Activated naive CD4-positive, alpha-beta T cell treated with anti-CD3 and anti-CD28 coated beads, Interleukin-2, amount 10 ng/mL, durations not matched to agents 7 days and 5 days (primary cell): ENCODE measurements at regions of chr9 and their contacts with region 1.

Region 1: GRCh38 chr9:35732122-35732799 is at the starts of genes CREB3 and TLN1:
- DNase-seq: peak; percentile 99
- H3K4me3 Mint-ChIP-seq: no peak within 1 kb of the TSS
- H3K27ac Mint-ChIP-seq: peak within 1 kb of the TSS; percentile 92
- H3K4me1 Mint-ChIP-seq: peaks cover 34% of the 10 kb centered on the region
- H3K27me3 Mint-ChIP-seq: no peaks in the 10 kb centered on the region

Region 2: DNA sequence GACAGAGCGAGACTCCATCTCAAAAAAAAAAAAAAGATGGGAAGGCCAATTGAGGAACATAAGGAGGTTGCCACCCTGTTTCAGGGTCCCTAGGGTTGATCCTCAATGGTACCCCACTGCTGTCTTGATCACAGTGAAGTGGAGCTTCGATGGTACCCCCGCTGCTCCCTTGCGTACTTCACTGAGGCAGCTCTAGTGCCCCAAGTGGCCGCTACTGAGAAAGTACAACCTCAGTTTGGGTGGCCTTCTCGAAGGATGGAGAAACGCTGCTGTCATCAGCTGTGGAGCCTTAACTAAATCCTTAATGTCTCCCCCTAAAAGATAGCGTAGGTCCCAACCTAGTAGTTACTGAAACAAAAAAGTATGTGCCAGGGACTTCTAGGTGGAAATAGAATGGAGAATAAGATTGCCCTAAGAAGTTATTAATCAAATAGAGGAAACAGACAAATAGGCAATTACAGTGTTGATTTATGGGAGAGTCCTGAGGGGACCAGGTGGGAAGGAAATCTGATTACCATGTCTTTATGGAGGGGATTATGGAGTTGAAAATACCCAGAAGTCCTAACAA is 120.9 kb before region 1 on chr9:
- CTCF ChIA-PET with region 1: interaction called, 15 read pairs
- DNase-seq: peak; percentile 70
- H3K4me3 Mint-ChIP-seq: no peak overlapping the region
- H3K27ac Mint-ChIP-seq: no peak overlapping the region
- H3K4me1 Mint-ChIP-seq: peaks cover 25% of the 10 kb centered on the region
- H3K27me3 Mint-ChIP-seq: peaks cover 27% of the 10 kb centered on the region

Region 3: DNA sequence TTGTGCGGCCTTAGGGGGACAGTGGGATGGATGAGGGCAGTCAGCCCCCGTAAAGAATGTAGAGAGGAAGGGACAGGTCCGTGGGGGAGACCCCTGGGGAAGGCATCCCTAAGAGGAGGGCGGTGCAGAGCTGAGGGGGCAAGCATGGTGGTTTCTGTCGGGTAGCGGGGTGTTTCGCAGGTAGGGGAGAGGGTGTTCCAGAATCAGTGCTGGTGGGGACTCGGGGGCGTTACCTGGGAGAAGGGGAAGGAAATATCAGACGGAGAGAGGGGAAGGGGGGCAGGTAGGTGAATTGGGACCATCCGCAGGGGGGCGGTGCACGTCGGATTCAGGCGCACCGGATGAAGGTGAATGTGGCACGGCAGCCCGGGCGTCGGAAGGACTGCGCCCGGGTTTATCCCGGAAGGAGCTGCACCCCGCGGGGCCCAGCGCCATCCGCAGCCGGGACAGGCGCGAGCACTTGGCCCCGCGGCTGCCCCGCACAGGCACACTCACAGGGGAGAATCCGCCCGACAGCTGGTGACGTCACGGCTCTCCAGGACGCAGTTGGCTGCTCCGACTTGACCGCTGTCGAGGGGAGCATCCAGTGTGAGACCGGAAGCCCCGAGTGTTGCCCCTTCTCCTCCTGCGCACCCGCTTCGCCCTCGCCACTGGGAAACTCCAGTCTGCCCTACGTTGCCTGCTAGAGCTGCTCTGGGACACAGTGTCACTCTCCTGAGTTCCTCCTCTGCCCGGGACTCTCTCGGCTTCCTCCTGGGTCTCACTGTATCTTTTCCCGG is 115.4 kb before region 1 on chr9:
- CTCF ChIA-PET with region 1: interaction called, 15 read pairs
- DNase-seq: peak; percentile 79
- H3K4me3 Mint-ChIP-seq: peak overlapping the region; percentile 80
- H3K27ac Mint-ChIP-seq: peak overlapping the region; percentile 79
- H3K4me1 Mint-ChIP-seq: peaks cover 49% of the 10 kb centered on the region
- H3K27me3 Mint-ChIP-seq: peaks cover 27% of the 10 kb centered on the region

Region 4: GRCh38 chr9:35657546-35658136 is 74.6 kb before region 1 on chr9 and contains the start of gene RMRP:
- CTCF ChIA-PET with region 1: interaction called, 22 read pairs
- DNase-seq: peak; percentile 91
- H3K4me3 Mint-ChIP-seq: peak within 1 kb of the TSS; percentile 81
- H3K27ac Mint-ChIP-seq: peak within 1 kb of the TSS; percentile 96
- H3K4me1 Mint-ChIP-seq: peaks cover 69% of the 10 kb centered on the region
- H3K27me3 Mint-ChIP-seq: peaks cover 18% of the 10 kb centered on the region

Region 5: DNA sequence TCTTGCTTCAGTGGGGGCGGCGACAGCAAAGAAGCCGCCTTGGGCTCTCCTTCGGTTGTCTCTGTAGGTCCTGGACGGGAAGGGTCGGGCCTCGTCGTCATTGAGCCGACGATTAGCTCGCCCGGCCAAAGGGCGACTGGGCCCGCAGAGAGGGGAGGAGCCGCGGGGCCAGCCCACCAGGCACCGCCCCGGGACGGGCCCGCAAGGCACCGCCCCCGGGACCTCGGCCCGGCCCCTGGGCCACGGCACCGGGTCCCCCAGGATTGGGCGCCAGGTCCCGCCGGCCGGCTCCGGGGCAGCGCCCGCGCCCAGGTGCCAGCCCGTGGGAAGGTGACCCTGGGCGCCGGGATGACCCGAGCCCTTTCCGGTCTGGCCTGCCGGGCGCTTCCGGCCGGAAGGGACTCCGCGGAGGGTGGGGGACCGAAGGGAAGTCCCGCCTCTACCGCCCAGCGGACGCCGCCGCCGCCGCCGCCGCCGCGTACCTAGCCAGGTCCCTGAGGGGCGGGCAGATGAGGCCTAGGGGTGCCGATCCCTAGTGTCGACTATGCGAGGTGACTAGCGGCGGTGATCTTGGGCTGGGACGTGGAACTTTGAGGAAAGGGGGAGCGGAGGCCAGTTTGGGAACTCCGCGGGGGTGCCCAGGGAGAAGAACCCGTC is 16.7 kb after region 1 on chr9 and contains the starts of genes GBA2 and RGP1:
- CTCF ChIA-PET with region 1: interaction called, 83 read pairs
- DNase-seq: peak; percentile 81
- H3K4me3 Mint-ChIP-seq: peak within 1 kb of the TSS; percentile 90
- H3K27ac Mint-ChIP-seq: peak within 1 kb of the TSS; percentile 93
- H3K4me1 Mint-ChIP-seq: peaks cover 47% of the 10 kb centered on the region
- H3K27me3 Mint-ChIP-seq: no peaks in the 10 kb centered on the region

Region 6: DNA sequence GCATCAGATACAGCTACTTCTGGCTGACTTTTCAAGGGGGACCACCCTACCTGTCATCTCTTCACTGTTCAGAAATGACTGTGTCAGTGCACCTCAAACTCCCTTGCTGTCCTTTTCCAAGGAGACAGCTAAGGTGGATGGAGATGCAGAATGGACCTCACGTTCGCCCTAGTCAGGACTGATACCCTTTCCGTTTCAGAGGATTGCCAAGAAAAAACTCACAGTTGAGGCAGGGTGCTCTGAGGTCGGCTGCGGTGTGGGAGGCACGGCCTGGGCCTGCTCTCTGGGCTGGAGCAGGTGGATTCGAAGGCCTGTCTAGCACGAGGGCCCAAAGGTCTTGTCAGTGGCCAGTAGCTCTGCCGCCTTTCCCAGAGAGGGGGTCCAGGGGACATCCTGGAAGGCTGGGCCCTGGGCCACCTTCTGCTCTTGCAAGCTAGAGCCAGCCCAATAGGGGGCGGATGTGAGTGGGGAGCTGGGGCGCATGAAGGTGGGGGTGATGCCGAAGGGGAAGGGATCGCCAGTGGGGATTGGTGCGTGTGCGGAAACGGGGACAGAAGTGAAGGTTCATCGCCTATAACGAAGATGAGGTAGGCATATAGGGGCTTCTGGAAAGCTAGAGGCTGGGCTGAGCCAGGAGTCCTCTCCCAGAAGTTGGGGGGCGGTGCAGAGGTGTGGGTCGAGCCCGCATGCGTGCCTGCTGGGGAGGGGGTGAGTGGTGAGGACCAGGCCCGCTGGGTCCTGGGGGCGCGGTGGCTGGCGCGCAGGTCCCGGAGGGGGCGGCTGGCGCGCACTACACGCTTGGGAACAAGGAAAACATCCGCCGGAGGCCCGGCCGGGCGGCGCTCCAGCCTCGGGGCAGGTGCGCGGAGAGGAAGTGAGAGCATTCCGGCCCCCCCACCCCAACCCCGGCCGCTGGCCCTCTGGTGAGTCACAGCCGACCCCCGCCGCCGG is 24.3 kb after region 1 on chr9:
- CTCF ChIA-PET with region 1: interaction called, 25 read pairs
- DNase-seq: peak; percentile 87
- H3K4me3 Mint-ChIP-seq: peak overlapping the region; percentile 90
- H3K27ac Mint-ChIP-seq: peak overlapping the region; percentile 92
- H3K4me1 Mint-ChIP-seq: peaks cover 46% of the 10 kb centered on the region
- H3K27me3 Mint-ChIP-seq: peaks cover 3% of the 10 kb centered on the region

Region 7: GRCh38 chr9:35842795-35843194 is 110.5 kb after region 1 on chr9:
- CTCF ChIA-PET with region 1: no interaction called
- DNase-seq: no peak
- H3K4me3 Mint-ChIP-seq: no peak overlapping the region
- H3K27ac Mint-ChIP-seq: no peak overlapping the region
- H3K4me1 Mint-ChIP-seq: peaks cover 25% of the 10 kb centered on the region
- H3K27me3 Mint-ChIP-seq: peaks cover 13% of the 10 kb centered on the region

Region 8: GRCh38 chr9:35882263-35882848 is 150.1 kb after region 1 on chr9:
- CTCF ChIA-PET with region 1: interaction called, 22 read pairs
- DNase-seq: peak; percentile 85
- H3K4me3 Mint-ChIP-seq: no peak overlapping the region
- H3K27ac Mint-ChIP-seq: no peak overlapping the region
- H3K4me1 Mint-ChIP-seq: no peaks in the 10 kb centered on the region
- H3K27me3 Mint-ChIP-seq: peaks cover 41% of the 10 kb centered on the region

Region 9: GRCh38 chr9:36551129-36551528 is 818.9 kb after region 1 on chr9:
- CTCF ChIA-PET with region 1: no interaction called
- DNase-seq: no peak
- H3K4me3 Mint-ChIP-seq: no peak overlapping the region
- H3K27ac Mint-ChIP-seq: no peak overlapping the region
- H3K4me1 Mint-ChIP-seq: peaks cover 3% of the 10 kb centered on the region
- H3K27me3 Mint-ChIP-seq: peaks cover 19% of the 10 kb centered on the region